WTC11 (cell line): ENCODE measurements at regions of chr11 and their contacts with region 1.

Region 1: GRCh38 chr11:45815449-45816146 is 10.6 kb downstream of the SLC35C1 start:
- DNase-seq: no peak
- ATAC-seq: peak; percentile 77
- H3K4me3 Mint-ChIP-seq: no peak overlapping the region
- H3K27ac Mint-ChIP-seq: peak overlapping the region; percentile 54; the same call in 1 of the 2 replicates
- H3K4me1 Mint-ChIP-seq: peaks cover 26% of the 10 kb centered on the region
- H3K27me3 Mint-ChIP-seq: peaks cover 22% of the 10 kb centered on the region
- CTCF ChIP-seq: no peak

Region 2: GRCh38 chr11:45724145-45724544 is 91.5 kb before region 1 on chr11:
- CTCF ChIA-PET with region 1: no interaction called
- POLR2A ChIA-PET with region 1: no interaction called
- DNase-seq: no peak
- ATAC-seq: peak; percentile 72
- H3K4me3 Mint-ChIP-seq: peak overlapping the region; percentile 4; the same call in 1 of the 2 replicates
- H3K27ac Mint-ChIP-seq: peak overlapping the region; percentile 17; the same call in 1 of the 2 replicates
- H3K4me1 Mint-ChIP-seq: peaks cover 17% of the 10 kb centered on the region
- H3K27me3 Mint-ChIP-seq: no peaks in the 10 kb centered on the region; the same call in 1 of the 2 replicates
- CTCF ChIP-seq: no peak

Region 3: DNA sequence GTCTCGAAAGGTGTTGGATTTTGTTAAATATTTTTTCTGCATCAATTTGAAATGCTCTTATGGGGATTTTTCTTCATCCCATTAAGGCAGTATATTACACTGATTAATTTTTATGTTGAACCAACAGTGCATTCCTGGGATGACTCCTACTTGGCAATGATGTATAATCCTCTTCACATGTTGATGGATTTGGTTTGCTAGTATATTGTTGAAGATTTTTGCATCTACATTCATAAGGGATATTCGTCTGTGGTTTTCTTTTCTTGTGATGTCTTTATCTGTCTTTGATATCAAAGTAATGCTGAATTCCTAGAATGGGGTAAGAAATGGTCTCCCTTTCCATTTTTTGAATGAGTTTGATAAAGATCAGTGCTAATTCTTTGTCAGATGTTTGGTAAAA is 29.3 kb before region 1 on chr11:
- CTCF ChIA-PET with region 1: no interaction called
- POLR2A ChIA-PET with region 1: no interaction called
- DNase-seq: no peak
- ATAC-seq: no peak
- H3K4me3 Mint-ChIP-seq: no peak overlapping the region
- H3K27ac Mint-ChIP-seq: no peak overlapping the region
- H3K4me1 Mint-ChIP-seq: no peaks in the 10 kb centered on the region
- H3K27me3 Mint-ChIP-seq: peaks cover 23% of the 10 kb centered on the region
- CTCF ChIP-seq: no peak

Region 4: DNA sequence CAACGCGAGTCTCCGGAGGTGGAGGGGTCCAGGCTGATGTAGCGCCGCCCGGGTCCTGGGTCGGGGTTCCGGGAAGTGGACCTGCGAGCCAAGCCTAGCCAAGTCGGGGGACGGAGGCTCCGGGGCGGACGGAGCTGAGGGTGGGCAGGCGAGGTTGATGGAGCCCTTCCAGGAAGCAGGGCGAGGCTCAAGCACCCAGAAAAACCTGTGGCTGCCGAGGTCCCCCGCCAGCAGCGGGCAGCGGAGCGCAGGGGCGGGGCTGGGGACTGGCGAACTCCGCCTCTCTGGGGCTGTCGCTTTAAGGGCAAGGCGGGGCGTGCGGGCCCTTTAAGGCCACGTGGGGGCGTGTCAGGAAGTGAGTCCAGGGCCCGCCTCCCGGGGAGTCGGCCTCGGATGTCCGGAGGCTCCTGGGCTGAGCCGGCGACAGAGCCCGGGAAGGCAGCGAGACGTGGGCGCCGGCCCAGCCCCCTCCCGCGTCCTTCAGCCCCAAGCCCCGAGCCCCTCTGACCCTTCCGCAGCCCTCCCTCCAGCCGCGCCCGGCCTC is 10.8 kb before region 1 on chr11 and contains the start of gene SLC35C1:
- CTCF ChIA-PET with region 1: interaction called, 21 read pairs
- POLR2A ChIA-PET with region 1: no interaction called
- DNase-seq: peak; percentile 97
- ATAC-seq: peak; percentile 87
- H3K4me3 Mint-ChIP-seq: peak within 1 kb of the TSS; percentile 93
- H3K27ac Mint-ChIP-seq: no peak within 1 kb of the TSS
- H3K4me1 Mint-ChIP-seq: peaks cover 14% of the 10 kb centered on the region
- H3K27me3 Mint-ChIP-seq: peaks cover 28% of the 10 kb centered on the region
- CTCF ChIP-seq: peak; percentile 35; the same call in 1 of the 2 replicates
- total RNA-seq, gene SLC35C1: 10.4 to 14.3 TPM (median 12.1 TPM) in 3 replicates

Region 5: GRCh38 chr11:45843118-45843924 is 27.7 kb after region 1 on chr11:
- CTCF ChIA-PET with region 1: interaction called, 11 read pairs
- POLR2A ChIA-PET with region 1: interaction called, 3 read pairs
- DNase-seq: peak; percentile 91
- ATAC-seq: peak; percentile 29
- H3K4me3 Mint-ChIP-seq: no peak overlapping the region
- H3K27ac Mint-ChIP-seq: no peak overlapping the region
- H3K4me1 Mint-ChIP-seq: peaks cover 7% of the 10 kb centered on the region
- H3K27me3 Mint-ChIP-seq: peaks cover 36% of the 10 kb centered on the region
- CTCF ChIP-seq: peak; percentile 92

Region 6: DNA sequence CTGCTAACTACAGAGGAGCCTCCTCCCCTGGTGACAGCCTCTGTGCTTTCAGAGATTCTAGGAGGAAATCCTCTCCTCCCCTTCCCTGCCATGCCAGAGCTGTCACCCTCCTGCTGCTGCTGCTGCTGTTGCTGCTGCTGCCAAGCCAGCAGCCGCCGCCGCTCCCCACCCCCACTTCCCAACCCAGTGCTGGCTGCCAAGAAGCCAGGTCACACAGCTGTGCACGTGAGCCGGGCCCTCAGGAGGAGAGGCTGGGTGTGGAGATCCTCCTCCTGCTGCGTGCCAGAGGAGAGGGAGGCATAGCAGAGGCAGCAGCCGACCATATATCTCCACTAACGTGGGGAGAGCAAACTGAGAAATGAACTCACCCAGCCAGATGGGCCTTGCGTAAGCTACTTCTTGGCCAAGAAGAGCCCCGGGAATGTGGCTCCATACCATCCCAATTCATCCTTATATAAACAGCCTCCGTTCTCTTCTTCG is 44.1 kb after region 1 on chr11:
- CTCF ChIA-PET with region 1: no interaction called
- POLR2A ChIA-PET with region 1: no interaction called
- DNase-seq: peak; percentile 46
- ATAC-seq: peak; percentile 63
- H3K4me3 Mint-ChIP-seq: no peak overlapping the region
- H3K27ac Mint-ChIP-seq: no peak overlapping the region
- H3K4me1 Mint-ChIP-seq: peaks cover 28% of the 10 kb centered on the region
- H3K27me3 Mint-ChIP-seq: no peaks in the 10 kb centered on the region
- CTCF ChIP-seq: no peak

Region 7: DNA sequence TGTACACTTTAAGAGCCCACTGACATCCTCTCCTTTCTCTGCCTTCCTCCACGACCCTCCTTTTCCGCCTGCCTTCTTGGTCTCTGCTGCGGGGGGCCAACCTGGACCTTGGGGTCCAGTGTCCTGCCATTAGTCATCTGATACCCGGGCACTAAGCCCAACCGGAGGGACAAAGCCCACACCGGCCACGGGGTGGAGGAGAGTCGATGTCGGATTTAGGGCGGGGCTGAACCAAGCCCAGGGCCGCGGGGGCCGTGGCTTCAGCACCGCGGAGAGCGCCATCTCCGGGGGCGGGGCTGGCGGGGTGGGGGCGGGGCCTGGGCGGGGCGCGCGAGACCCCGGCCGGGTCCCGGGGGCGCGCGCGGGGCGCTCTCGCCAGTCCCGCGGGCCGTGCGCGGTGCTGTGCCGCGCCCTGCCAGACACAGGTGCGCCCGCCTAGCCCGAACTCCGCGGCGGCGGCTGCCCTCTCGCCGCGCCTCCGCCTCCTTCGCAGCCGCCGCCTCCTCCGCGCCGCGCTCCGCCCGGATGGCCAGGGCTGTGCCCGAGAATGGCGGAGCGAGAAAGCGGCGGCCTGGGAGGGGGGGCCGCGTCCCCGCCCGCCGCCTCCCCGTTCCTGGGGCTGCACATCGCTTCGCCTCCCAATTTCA is 69.8 kb after region 1 on chr11 and contains the start of gene MAPK8IP1:
- CTCF ChIA-PET with region 1: no interaction called
- POLR2A ChIA-PET with region 1: no interaction called
- DNase-seq: peak; percentile 76
- ATAC-seq: peak; percentile 80
- H3K4me3 Mint-ChIP-seq: peak within 1 kb of the TSS; percentile 70
- H3K27ac Mint-ChIP-seq: no peak within 1 kb of the TSS
- H3K4me1 Mint-ChIP-seq: no peaks in the 10 kb centered on the region
- H3K27me3 Mint-ChIP-seq: peaks cover 7% of the 10 kb centered on the region; the same call in 1 of the 2 replicates
- CTCF ChIP-seq: no peak
- total RNA-seq, gene MAPK8IP1: 31.6 to 34.1 TPM (median 32.4 TPM) in 3 replicates